ENCODE measurements at regions of chr12 and their contacts with region 1.

Region 1: DNA sequence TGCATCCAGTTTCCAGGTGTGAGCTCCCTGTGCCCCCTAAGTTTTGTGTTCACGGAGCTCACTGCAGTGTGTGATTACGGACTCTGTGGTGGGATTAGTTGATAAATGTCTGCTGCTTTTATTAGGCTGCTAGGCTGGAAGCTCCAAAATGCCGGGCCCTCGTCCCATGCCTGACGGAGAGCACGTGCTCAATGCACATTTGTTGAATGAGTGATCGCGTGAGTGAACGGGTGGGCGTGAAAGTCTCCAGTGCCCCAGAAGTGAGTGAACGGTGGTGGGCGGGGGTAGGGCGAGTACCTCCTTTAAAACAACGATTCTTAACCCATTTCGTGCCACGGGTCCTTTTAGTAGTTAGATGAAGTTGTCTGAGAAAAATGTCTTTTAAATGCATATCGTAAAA is 175.5 kb downstream of the AACS start:
- DNase-seq: no peak
- ATAC-seq: no peak
- H3K4me3 Mint-ChIP-seq: no peak overlapping the region
- H3K27ac Mint-ChIP-seq: peak overlapping the region; percentile 80; the same call in 1 of the 2 replicates
- H3K4me1 Mint-ChIP-seq: peaks cover 47% of the 10 kb centered on the region
- H3K27me3 Mint-ChIP-seq: no peaks in the 10 kb centered on the region
- CTCF ChIP-seq: no peak

Region 2: GRCh38 chr12:125183187-125184067 is 57.3 kb before region 1 on chr12:
- CTCF ChIA-PET with region 1: interaction called, 22 read pairs
- POLR2A ChIA-PET with region 1: interaction called, 4 read pairs
- DNase-seq: peak; percentile 91
- ATAC-seq: peak; percentile 46
- H3K4me3 Mint-ChIP-seq: peak overlapping the region; percentile 62
- H3K27ac Mint-ChIP-seq: no peak overlapping the region
- H3K4me1 Mint-ChIP-seq: peaks cover 37% of the 10 kb centered on the region
- H3K27me3 Mint-ChIP-seq: peaks cover 27% of the 10 kb centered on the region
- CTCF ChIP-seq: peak; percentile 100

Region 3: GRCh38 chr12:125228519-125229260 is 12.0 kb before region 1 on chr12:
- CTCF ChIA-PET with region 1: interaction called, 26 read pairs
- POLR2A ChIA-PET with region 1: no interaction called
- DNase-seq: peak; percentile 26
- ATAC-seq: peak; percentile 91
- H3K4me3 Mint-ChIP-seq: no peak overlapping the region
- H3K27ac Mint-ChIP-seq: no peak overlapping the region; the same call in 1 of the 2 replicates
- H3K4me1 Mint-ChIP-seq: peaks cover 16% of the 10 kb centered on the region
- H3K27me3 Mint-ChIP-seq: no peaks in the 10 kb centered on the region
- CTCF ChIP-seq: no peak

Region 4: GRCh38 chr12:125324861-125325490 is 84.3 kb after region 1 on chr12:
- CTCF ChIA-PET with region 1: interaction called, 17 read pairs
- POLR2A ChIA-PET with region 1: no interaction called
- DNase-seq: no peak
- ATAC-seq: peak; percentile 23; the same call in 1 of the 2 replicates
- H3K4me3 Mint-ChIP-seq: no peak overlapping the region
- H3K27ac Mint-ChIP-seq: peak overlapping the region; percentile 34; the same call in 1 of the 2 replicates
- H3K4me1 Mint-ChIP-seq: peaks cover 49% of the 10 kb centered on the region
- H3K27me3 Mint-ChIP-seq: peaks cover 3% of the 10 kb centered on the region; the same call in 1 of the 2 replicates
- CTCF ChIP-seq: no peak

Region 5: DNA sequence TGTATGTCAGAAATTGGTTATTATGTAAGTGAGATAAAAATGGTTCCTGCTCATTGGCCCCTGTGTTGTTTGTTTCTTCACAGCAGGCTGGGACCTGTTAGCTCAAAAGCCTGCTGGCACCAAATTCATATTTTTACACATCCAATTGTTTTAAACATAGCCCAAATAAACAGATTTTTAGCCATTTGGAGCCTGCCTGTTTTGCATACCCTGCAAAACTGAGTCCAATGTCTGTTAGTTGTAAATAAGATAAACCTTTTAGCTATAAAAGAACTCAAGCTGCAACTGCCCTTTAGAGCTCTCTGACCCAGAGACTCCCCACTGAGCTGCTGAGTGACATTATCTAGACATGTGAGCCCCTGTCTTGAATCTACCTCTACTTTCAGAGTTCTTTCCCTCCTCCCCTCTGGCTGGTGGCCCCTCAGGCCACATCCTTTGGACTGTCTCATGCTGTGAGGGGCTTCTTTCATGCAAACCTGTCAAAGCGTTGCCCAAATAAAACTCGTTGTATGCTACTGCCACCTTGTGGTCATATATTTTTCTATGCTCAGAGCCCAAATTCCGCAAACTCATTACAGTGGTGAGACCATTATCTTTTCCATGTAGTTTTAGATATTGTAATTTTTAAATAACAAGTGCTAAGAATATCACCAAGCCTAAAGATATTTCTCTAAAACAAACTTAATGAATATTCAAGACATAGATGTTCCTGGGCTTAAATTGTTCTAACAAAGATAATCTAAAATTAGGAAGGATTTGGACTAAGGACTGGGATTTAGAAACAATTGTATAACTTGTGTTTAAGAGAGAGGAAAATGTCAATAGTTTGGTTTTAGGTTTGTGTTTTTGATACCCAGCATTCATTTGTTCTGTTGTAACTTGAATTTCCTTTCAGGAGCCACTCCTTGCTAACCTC is 162.4 kb after region 1 on chr12:
- CTCF ChIA-PET with region 1: interaction called, 17 read pairs
- POLR2A ChIA-PET with region 1: no interaction called
- DNase-seq: peak; percentile 71
- ATAC-seq: peak; percentile 92
- H3K4me3 Mint-ChIP-seq: no peak overlapping the region
- H3K27ac Mint-ChIP-seq: no peak overlapping the region
- H3K4me1 Mint-ChIP-seq: peaks cover 36% of the 10 kb centered on the region
- H3K27me3 Mint-ChIP-seq: no peaks in the 10 kb centered on the region
- CTCF ChIP-seq: 0 out of 2 replicates have a peak, but pooled peaks have one; percentile 30